HCT116 (cell line): ENCODE measurements at regions of chr10 and their contacts with region 1.

Region 1: GRCh38 chr10:3852147-3852904 is 67.3 kb upstream of the KLF6 start:
- DNase-seq: peak; percentile 99
- ATAC-seq: peak; percentile 95
- H3K4me3 ChIP-seq: peak overlapping the region in 1 of 2 experiments; percentile 23; a peak in 2 of 4 replicates
- H3K27ac ChIP-seq: peak overlapping the region; percentile 90
- H3K4me1 ChIP-seq: peaks cover 37 to 61% of the 10 kb centered on the region in 2 experiments
- H3K27me3 ChIP-seq: no peaks in the 10 kb centered on the region
- CTCF ChIP-seq: no peak
- POLR2A ChIP-seq: no peak
- RAD21 ChIP-seq: peak; percentile 47

Region 2: DNA sequence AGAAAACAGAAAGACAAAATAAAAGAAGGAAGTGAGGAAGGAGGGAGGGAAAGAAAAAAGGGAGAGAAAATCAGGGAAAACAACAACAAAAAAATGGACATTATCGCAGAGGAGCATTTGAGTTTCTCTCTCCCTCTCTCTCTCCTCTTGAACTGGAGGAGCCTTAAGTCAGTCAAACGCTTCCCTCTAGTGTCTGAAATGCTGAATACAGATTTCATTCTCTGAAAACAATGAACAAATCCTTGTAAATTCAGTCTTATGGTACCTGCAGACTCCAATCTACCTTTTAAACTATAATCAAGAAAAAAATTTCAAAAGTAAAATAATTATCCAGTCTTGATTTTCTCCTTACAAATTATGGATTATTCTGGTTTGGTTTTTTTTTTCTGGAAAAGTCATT is 874.2 kb before region 1 on chr10:
- CTCF ChIA-PET with region 1: no interaction called
- POLR2A ChIA-PET with region 1: no interaction called
- RAD21 ChIA-PET with region 1: no interaction called
- intact Hi-C with region 1: no loop called
- DNase-seq: peak; percentile 55
- ATAC-seq: peak; percentile 67
- H3K4me3 ChIP-seq: no peak overlapping the region
- H3K27ac ChIP-seq: no peak overlapping the region
- H3K4me1 ChIP-seq: peaks cover 0 to 13% of the 10 kb centered on the region in 2 experiments; a peak in 2 of 4 replicates
- H3K27me3 ChIP-seq: no peaks in the 10 kb centered on the region
- CTCF ChIP-seq: peak; percentile 39 to 64 (median 56); a peak in 3 of 6 replicates
- POLR2A ChIP-seq: no peak
- RAD21 ChIP-seq: peak; percentile 76

Region 3: DNA sequence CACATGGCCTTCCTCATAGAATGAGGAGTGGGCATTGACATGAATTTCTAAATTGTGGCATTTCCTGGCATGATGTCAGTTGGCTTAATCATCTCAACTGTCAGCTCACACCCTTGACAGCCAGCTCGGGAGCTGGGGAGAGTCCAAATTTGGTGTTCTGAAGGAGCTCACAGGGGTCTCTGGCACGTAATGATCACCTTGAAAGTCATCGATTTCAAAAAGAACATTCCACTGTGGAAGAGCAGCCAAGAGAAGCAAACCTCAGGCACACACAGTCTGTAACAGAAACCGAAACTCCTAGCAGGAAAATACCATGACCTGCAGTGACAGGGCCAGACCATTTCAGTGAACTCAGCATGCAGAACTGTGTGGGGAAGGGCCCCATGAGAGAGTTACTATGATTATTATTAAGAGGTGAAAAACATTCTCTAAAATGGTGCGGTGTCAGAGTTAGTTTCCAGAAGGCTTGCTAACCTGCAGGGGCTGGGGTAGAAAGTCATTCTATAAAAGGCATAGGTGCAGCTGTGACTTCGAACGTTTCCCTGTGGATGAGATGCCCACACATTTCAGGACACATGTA is 40.9 kb before region 1 on chr10:
- CTCF ChIA-PET with region 1: no interaction called
- POLR2A ChIA-PET with region 1: interaction called, 15 read pairs
- RAD21 ChIA-PET with region 1: no interaction called
- intact Hi-C with region 1: loop called (anchors 1 kb)
- DNase-seq: no peak
- ATAC-seq: no peak
- H3K4me3 ChIP-seq: peak overlapping the region in 1 of 2 experiments; percentile 37; a peak in 2 of 4 replicates
- H3K27ac ChIP-seq: peak overlapping the region; percentile 78
- H3K4me1 ChIP-seq: peaks cover 43 to 68% of the 10 kb centered on the region in 2 experiments
- H3K27me3 ChIP-seq: no peaks in the 10 kb centered on the region
- CTCF ChIP-seq: no peak
- POLR2A ChIP-seq: no peak
- RAD21 ChIP-seq: no peak

Region 4: DNA sequence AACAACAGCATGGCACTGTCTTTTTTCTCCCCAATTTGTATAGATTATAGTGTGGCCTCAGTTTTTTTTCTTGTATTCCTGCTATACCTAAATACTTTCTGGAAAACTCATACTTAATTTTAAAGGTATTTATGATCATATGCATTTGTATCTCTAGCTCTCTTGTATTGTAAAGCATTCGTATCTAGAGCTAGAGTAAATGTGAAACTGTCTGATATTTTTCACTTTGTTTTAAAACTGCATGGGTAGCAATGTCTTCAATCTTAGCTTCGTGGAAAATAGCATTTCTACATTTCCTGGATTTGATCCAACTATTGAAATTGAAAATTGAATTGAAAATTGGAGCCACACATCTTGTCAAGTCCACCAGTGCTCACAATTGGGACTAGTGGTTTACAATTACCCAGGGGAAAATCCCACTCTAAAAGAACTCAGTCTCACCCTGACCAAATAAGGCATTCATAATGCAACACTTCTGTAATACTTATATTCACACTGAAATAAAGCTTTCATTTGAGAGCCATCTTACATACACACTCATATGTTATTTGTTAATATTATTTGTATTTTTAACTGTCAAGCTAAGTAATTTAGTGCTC is 16.0 kb before region 1 on chr10:
- CTCF ChIA-PET with region 1: no interaction called
- POLR2A ChIA-PET with region 1: no interaction called
- RAD21 ChIA-PET with region 1: no interaction called
- intact Hi-C with region 1: no loop called
- DNase-seq: no peak
- ATAC-seq: no peak
- H3K4me3 ChIP-seq: no peak overlapping the region
- H3K27ac ChIP-seq: no peak overlapping the region
- H3K4me1 ChIP-seq: peaks cover 0 to 12% of the 10 kb centered on the region in 2 experiments; a peak in 2 of 4 replicates
- H3K27me3 ChIP-seq: no peaks in the 10 kb centered on the region
- CTCF ChIP-seq: no peak
- POLR2A ChIP-seq: no peak
- RAD21 ChIP-seq: no peak

Region 5: DNA sequence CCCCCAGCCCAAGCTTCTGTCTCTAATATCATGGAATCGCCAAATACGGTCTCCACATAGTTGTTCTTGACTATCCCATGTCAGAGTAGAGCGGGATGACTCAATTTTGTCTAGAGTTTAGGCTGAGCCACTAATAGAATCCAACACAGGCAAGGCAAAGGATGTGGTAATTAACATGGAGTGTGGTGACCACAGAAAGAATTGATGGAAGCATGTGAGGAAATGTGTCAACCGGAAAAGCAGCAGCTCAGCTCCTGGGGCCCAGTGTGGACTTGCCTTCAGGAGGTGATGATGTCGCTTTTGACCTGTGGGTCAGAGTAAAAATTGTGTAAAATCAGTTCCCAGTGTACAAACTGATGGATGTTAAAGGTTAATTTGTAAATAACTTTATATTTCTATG is 72.0 kb after region 1 on chr10:
- CTCF ChIA-PET with region 1: no interaction called
- POLR2A ChIA-PET with region 1: no interaction called
- RAD21 ChIA-PET with region 1: no interaction called
- intact Hi-C with region 1: no loop called
- DNase-seq: no peak
- ATAC-seq: no peak
- H3K4me3 ChIP-seq: no peak overlapping the region
- H3K27ac ChIP-seq: no peak overlapping the region
- H3K4me1 ChIP-seq: peaks cover 0 to 6% of the 10 kb centered on the region in 2 experiments; a peak in 1 of 4 replicates
- H3K27me3 ChIP-seq: no peaks in the 10 kb centered on the region
- CTCF ChIP-seq: no peak
- POLR2A ChIP-seq: no peak
- RAD21 ChIP-seq: no peak

Region 6: GRCh38 chr10:4013651-4014121 is 161.4 kb after region 1 on chr10:
- CTCF ChIA-PET with region 1: no interaction called
- POLR2A ChIA-PET with region 1: no interaction called
- RAD21 ChIA-PET with region 1: no interaction called
- intact Hi-C with region 1: no loop called
- DNase-seq: no peak
- ATAC-seq: no peak
- H3K4me3 ChIP-seq: no peak overlapping the region
- H3K27ac ChIP-seq: no peak overlapping the region
- H3K4me1 ChIP-seq: no peaks in the 10 kb centered on the region
- H3K27me3 ChIP-seq: no peaks in the 10 kb centered on the region
- CTCF ChIP-seq: no peak
- POLR2A ChIP-seq: no peak
- RAD21 ChIP-seq: no peak